ENCODE measurements at regions of chr2 and their contacts with region 1.

Region 1: DNA sequence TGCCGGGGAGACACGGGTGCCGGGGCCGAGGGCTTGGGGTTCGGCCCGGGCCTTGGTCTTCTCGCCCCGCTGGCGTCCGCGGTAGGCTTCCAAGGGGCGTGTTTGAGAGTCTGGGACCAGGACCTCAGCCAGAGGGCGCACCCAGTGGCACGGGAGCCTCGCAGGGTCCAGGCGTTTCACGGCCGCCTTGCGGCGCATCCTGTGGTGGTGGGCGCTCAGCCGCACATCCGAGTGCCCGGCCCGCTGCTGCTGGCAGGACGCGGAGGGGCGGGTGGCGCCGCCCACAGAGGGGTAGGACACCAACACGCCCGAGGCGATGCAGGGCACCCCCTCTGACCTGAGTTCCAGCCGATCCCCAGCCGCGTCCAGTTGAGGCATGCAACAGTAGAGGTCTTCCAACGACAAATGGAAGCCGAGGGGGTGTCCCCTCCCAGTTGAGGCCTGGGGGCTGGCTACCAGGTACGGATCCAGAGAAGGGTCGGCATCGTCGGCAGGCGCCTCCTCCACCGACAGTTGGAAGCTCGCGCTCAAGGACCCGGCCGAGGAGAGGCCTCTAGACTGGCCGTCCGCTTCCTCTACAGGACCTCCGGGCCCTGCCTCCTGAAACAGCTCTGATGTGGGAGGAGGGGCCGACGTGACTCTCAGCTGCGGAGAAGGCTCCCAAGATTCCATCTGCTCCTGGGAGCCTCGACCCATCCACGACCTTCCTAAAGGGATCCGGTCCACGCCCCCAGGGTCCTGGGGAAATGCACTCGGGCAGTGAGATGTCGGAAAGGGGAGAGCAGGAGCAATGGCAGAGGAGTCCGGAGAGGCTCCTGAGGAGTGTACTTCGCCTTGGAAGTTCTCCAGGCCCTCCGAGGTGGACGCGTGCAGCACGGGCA is 6.3 kb downstream of the C2orf81 start:
- DNase-seq: peak; percentile 66 to 80 (median 69)
- ATAC-seq: peak; percentile 51 to 81 (median 76)
- H3K4me3 ChIP-seq: peak overlapping the region; percentile 42 to 77 (median 65)
- H3K27ac ChIP-seq: peak overlapping the region in 11 of 12 donors; percentile 36 to 83 (median 58)
- H3K4me1 ChIP-seq: peaks cover 0 to 43% (median 20%) of the 10 kb centered on the region in 12 donors
- H3K27me3 ChIP-seq: no peaks in the 10 kb centered on the region
- CTCF ChIP-seq: peak; percentile 23 to 69 (median 48)
- POLR2A ChIP-seq: no peak

Region 2: DNA sequence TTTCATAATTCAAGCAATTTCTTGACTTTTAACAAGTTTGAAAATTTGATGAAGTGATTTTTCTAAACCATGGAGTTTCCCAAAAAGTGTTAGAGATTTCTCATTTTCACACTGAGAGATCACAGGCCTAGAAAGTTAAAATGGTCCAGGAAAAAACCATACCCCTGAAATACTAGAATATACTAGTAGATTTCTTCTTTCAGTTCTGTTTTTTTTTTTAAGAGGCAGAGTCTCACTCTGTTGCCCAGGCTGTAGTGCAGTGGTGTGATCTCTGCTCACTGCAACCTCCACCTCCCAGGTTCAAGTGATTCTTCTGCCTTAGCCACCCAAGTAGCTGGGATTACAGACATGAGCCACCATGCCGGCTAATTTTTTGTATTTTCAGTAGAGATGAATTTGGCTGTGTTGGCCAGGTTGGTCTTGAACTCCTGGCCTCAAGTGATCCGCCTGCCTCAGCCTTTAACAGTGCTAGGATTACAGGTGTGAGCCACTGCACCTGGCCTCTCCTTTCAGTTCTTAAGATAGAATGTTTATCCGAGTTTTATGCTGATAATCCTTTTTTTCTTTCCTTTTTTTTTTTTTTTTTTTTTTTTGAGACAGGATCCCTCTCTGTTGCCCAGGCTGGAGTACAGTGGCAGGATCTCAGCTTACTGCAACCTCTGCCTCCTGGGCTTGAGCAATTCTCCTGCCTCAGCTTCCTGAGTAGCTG is 202.3 kb before region 1 on chr2:
- intact Hi-C with region 1: no loop called
- DNase-seq: no peak
- ATAC-seq: no peak
- H3K4me3 ChIP-seq: no peak overlapping the region
- H3K27ac ChIP-seq: no peak overlapping the region
- H3K4me1 ChIP-seq: peaks cover 0 to 2% (median 0%) of the 10 kb centered on the region in 12 donors
- H3K27me3 ChIP-seq: no peaks in the 10 kb centered on the region
- CTCF ChIP-seq: no peak
- POLR2A ChIP-seq: no peak

Region 3: DNA sequence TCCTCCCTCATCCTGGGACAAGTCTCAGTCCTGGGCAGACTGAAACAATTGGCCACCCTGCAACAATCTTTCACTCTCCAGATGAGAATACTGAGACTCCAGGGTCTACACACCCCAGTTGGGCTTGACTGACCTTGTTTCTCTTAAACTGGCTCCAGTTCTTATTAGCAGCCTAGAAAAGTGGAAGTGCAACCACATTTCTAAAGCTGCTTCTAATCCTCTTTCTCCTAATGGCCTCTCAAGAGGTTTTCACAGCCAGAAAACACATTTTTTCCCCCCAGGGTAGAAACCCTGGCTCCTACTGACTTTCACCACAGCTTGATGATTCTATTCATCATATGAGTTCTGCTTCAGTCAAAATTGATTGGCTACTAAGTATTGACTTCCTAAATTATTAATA is 117.7 kb before region 1 on chr2:
- intact Hi-C with region 1: no loop called
- DNase-seq: no peak
- ATAC-seq: no peak
- H3K4me3 ChIP-seq: no peak overlapping the region
- H3K27ac ChIP-seq: no peak overlapping the region
- H3K4me1 ChIP-seq: peaks cover 0 to 7% (median 0%) of the 10 kb centered on the region in 12 donors
- H3K27me3 ChIP-seq: no peaks in the 10 kb centered on the region
- CTCF ChIP-seq: no peak
- POLR2A ChIP-seq: no peak

Region 4: GRCh38 chr2:74440378-74441169 is 25.5 kb after region 1 on chr2:
- intact Hi-C with region 1: loop called in 1 of 10 experiments (anchors 2 kb)
- DNase-seq: peak; percentile 91 to 94 (median 93)
- ATAC-seq: peak; percentile 90 to 95 (median 93)
- H3K4me3 ChIP-seq: peak overlapping the region; percentile 30 to 72 (median 60)
- H3K27ac ChIP-seq: peak overlapping the region; percentile 77 to 95 (median 86)
- H3K4me1 ChIP-seq: peaks cover 0 to 63% (median 37%) of the 10 kb centered on the region in 12 donors
- H3K27me3 ChIP-seq: peaks cover 0 to 39% (median 0%) of the 10 kb centered on the region in 9 donors
- CTCF ChIP-seq: peak in 9 of 12 donors; percentile 11 to 52 (median 29)
- POLR2A ChIP-seq: peak in 1 of 2 donors; percentile 68

Region 5: DNA sequence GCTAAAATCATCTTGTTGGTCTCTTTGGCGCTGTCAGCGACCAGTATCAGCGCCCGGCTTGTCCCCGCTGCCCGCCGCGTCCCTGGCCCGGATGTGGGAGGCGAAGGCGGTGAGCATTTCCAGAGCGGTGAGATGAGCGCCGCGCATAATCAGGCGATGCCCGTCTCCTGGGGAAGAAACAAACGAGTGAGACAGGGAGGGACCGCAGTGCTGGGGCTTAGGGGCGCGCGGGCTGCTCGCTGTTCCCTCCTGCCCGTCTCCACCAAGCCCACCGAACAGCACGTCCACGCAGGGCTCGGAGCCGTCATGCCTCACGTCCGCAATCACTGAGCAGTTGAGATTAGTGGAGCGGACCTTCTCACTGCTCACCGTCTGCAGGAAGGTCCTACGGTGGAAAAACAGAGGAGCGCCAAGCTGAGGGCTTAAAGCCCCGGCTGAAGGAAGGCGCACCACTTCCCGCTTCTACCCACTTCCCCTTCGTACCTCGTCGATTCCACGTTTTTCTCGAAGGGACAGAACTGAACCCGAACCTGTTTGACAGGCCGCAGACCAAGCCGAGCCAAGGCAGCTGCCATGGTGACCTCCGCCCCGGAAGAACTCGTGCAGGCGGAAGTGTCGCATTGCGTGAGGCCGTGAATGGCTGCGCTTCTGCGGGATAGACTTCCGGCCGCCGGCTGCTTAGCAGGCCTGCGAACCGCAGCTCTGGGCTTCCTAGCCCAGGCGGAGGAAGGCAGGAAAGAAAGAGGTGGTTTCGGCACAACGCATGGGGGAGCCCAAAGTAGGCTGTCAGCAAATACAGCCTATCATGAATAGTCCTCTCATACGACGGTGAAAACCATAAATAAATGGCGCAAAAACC is 57.2 kb after region 1 on chr2 and contains the start of gene MRPL53:
- intact Hi-C with region 1: no loop called
- DNase-seq: peak; percentile 95 to 98 (median 96)
- ATAC-seq: peak; percentile 91 to 97 (median 94)
- H3K4me3 ChIP-seq: peak within 1 kb of the TSS; percentile 49 to 93 (median 74)
- H3K27ac ChIP-seq: peak within 1 kb of the TSS; percentile 64 to 95 (median 89)
- H3K4me1 ChIP-seq: peaks cover 4 to 31% (median 21%) of the 10 kb centered on the region in 12 donors
- H3K27me3 ChIP-seq: no peaks in the 10 kb centered on the region
- CTCF ChIP-seq: no peak
- POLR2A ChIP-seq: peak in 1 of 2 donors; percentile 88
- total RNA-seq, gene MRPL53: 64.9 to 180 (median 140) TPM

Region 6: DNA sequence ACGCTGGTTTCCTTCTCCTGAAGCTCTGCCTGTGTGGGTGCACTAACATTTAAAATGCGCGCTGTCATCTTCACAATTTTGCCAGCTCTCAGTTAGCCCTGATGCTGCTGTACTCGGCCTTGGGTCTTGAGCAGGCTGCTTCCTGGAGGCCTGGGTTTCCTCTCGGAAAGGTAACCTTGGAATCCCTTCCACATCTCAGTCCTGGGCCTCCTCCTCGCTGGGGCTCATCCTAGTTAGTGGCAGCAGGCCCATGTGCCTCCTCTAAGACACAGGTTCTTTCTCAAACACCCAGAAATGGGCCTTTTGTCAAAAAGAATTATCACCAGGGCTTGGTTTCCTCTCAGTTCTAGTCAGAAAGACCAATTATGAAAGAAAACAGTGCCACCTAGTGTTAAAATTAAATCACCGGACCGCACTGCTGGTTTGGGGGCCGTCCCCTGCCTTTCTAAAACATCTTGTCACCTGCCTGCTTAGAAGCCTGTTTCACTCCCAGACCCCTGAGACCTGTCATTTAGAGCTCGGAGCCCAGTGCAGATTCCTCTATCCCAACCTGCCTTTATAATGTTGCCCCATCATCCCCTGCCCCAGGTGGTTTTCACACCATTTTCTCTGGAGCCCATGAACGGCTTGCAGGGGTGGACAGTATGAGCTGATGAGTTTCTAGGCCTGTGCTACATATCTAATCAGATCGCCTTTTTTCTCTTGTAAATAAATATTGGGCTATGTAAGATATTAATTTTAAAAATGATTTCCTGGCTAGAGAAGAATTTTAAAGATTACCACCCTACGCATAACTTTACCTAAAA is 461.2 kb after region 1 on chr2:
- intact Hi-C with region 1: no loop called
- DNase-seq: peak in 1 of 5 donors; percentile 28
- ATAC-seq: peak in 3 of 4 donors; percentile 50 to 75 (median 69)
- H3K4me3 ChIP-seq: no peak overlapping the region
- H3K27ac ChIP-seq: peak overlapping the region in 1 of 12 donors; percentile 79
- H3K4me1 ChIP-seq: peaks cover 0 to 34% (median 3%) of the 10 kb centered on the region in 12 donors
- H3K27me3 ChIP-seq: no peaks in the 10 kb centered on the region
- CTCF ChIP-seq: peak; percentile 56 to 80 (median 70)
- POLR2A ChIP-seq: no peak

Measured in heart left ventricle (tissue), 16 donors.